Cardiac septum (tissue), 1 donor: ENCODE measurements at regions of chr7 and their contacts with region 1.

Region 1: DNA sequence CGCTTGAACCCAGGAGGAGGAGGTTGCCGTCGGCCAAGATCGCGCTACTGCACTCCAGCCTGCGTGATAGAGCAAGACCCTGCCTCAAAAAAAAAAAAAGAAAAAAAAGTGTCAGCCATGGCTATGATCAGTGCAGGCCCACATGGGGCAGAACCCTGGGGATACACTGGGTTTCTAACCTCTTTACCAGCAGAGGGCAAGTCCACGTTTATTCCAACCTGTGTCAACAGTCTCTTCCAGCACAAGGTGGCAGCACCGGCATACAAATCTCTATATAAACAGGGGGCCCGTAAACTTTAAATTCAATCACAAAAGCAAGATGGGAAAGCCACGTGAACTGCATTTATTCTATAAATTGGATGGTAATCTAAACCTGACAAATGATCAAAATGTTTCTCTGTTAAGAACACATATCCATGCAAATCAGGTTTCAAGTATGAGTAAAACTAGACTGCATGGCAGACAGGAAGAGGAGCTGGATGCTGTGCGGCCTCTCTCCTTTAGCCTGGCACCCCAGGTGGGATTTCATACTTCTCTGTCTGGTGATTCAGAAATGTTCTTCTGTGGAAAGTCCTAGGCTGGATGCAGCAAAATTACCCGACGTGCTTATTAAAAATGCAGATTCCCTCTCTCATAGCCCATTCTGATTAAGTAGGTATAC is 60.0 kb upstream of the STEAP1B start:
- DNase-seq: peak; percentile 78

Region 2: GRCh38 chr7:22726345-22727185 is 166.6 kb after region 1 on chr7:
- intact Hi-C with region 1: loop called (anchors 1 kb)
- DNase-seq: no peak

Region 3: GRCh38 chr7:22782616-22783232 is 222.8 kb after region 1 on chr7:
- intact Hi-C with region 1: loop called (anchors 2 kb)
- DNase-seq: no peak

Region 4: GRCh38 chr7:23055582-23056178 is 495.7 kb after region 1 on chr7:
- intact Hi-C with region 1: loop called (anchors 5 kb)
- DNase-seq: no peak